Calu3 (cell line): ENCODE measurements at regions of chr2 and their contacts with region 1.

Region 1: GRCh38 chr2:84925724-84926376 is 20.4 kb downstream of the TMSB10 start:
- DNase-seq: peak; percentile 99
- H3K4me3 Mint-ChIP-seq: peak overlapping the region; percentile 63
- H3K27ac Mint-ChIP-seq: peak overlapping the region; percentile 30
- H3K4me1 Mint-ChIP-seq: peaks cover 36% of the 10 kb centered on the region
- H3K27me3 Mint-ChIP-seq: no peaks in the 10 kb centered on the region
- CTCF ChIP-seq: peak; percentile 93

Region 2: DNA sequence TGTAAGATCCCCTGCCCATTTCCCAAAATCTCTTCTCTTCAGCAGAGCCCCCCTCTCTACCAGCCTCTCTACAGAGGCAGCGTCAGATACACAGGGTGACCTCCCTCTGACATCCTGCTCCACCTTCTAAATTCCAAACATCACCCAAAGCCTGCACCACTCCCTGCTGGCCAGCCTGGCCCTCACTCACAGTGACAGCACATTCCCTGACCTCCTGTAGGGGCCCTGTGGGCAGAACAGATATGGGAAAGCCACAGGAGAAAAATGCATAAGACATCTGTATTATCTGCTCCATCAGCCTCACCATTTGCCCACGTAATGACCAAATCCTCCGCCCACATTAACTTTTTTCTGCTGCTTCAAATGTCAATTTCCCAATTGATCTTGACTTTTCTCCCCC is 85.5 kb before region 1 on chr2:
- CTCF ChIA-PET with region 1: no interaction called
- intact Hi-C with region 1: no loop called
- DNase-seq: no peak
- H3K4me3 Mint-ChIP-seq: no peak overlapping the region
- H3K27ac Mint-ChIP-seq: no peak overlapping the region
- H3K4me1 Mint-ChIP-seq: peaks cover 10% of the 10 kb centered on the region
- H3K27me3 Mint-ChIP-seq: peaks cover 26% of the 10 kb centered on the region
- CTCF ChIP-seq: no peak

Region 3: DNA sequence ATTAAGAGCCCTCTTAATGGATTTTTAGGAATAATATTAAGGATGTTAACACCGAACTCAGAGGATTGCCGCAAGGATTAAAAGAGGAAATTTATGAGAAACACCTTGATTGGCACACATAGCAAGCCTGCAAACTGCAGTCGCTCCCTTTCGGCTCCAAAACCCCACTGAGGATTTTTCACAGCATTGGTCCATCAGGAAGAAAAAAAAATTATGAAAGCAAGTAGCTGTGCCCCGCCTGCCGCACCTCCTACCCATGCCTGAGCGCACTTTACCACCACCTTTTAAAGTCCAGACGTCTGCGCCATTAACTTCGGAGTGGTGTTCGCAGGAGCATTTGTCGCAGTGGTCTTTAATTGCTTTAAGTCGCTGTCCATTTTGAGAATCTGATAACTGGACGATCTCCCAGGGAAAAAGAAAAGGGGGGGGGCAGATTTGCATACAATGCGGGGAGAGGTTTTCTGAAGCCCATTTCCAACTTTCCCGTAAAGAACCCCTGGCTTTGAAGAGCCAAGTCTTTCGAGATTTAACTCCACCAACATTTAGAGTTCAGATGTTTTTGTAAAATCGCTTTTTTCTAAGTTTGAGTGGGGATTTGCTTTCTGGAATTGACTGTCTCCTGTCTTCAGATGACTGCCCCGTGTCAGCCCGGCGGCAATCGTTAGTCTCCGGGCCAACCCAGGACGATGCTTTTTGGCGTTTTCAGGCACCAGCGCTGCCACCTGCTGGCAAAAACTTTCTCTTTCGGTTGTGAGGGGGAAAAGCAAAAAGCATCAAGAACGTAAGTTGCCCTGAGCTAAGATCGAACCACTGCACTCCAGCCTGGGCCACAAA is 44.1 kb before region 1 on chr2:
- CTCF ChIA-PET with region 1: interaction called, 15 read pairs
- intact Hi-C with region 1: no loop called
- DNase-seq: peak; percentile 82
- H3K4me3 Mint-ChIP-seq: peak overlapping the region; percentile 81
- H3K27ac Mint-ChIP-seq: no peak overlapping the region
- H3K4me1 Mint-ChIP-seq: peaks cover 23% of the 10 kb centered on the region
- H3K27me3 Mint-ChIP-seq: peaks cover 41% of the 10 kb centered on the region
- CTCF ChIP-seq: peak; percentile 83

Region 4: GRCh38 chr2:84946204-84947009 is 20.6 kb after region 1 on chr2:
- CTCF ChIA-PET with region 1: interaction called, 15 read pairs
- intact Hi-C with region 1: no loop called
- DNase-seq: peak; percentile 87
- H3K4me3 Mint-ChIP-seq: peak overlapping the region; percentile 35
- H3K27ac Mint-ChIP-seq: peak overlapping the region; percentile 95
- H3K4me1 Mint-ChIP-seq: peaks cover 31% of the 10 kb centered on the region
- H3K27me3 Mint-ChIP-seq: no peaks in the 10 kb centered on the region
- CTCF ChIP-seq: no peak

Region 5: DNA sequence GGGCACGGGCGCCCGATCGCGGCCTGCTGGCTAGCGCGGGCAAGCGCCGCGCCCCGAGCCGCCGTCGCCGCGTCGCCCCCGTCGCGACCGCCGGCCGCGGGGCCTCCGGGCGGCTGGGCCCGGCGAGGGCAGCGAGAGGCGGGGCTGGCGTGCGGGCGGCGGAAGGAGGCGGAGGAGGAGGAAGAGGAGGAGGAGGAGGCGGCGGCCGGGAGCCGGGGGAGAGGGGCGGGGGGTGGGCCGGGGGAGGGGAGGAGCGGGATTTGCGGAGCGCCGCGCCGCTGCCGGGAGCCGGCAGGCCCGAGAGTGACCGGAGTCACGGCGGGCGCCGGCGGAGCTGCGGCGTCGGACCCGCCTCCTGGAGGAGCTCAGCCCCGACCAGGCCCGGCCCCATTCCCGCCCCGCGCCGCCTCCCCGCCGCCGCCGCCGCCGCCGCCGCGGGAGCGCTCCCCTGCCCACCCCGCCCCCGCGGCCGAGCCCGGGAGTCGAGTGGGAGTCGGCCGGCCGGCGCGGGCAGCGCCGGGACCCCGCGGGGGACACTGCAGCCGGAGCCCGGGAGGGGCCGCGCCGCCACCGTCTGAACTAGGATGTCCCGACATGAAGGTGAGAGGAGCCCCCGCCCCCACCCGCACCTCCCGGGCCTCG is 45.1 kb after region 1 on chr2 and contains the start of gene KCMF1:
- CTCF ChIA-PET with region 1: interaction called, 4 read pairs
- intact Hi-C with region 1: loop called (anchors 2 kb)
- DNase-seq: peak; percentile 84
- H3K4me3 Mint-ChIP-seq: peak within 1 kb of the TSS; percentile 71
- H3K27ac Mint-ChIP-seq: peak within 1 kb of the TSS; percentile 99
- H3K4me1 Mint-ChIP-seq: peaks cover 19% of the 10 kb centered on the region
- H3K27me3 Mint-ChIP-seq: no peaks in the 10 kb centered on the region
- CTCF ChIP-seq: no peak
- total RNA-seq, gene KCMF1: 68.0 and 69.8 TPM in 2 replicates

Region 6: GRCh38 chr2:85302121-85302520 is 376.3 kb after region 1 on chr2:
- CTCF ChIA-PET with region 1: interaction called, 4 read pairs
- intact Hi-C with region 1: loop called (anchors 2 kb)
- DNase-seq: no peak
- H3K4me3 Mint-ChIP-seq: no peak overlapping the region
- H3K27ac Mint-ChIP-seq: no peak overlapping the region
- H3K4me1 Mint-ChIP-seq: peaks cover 6% of the 10 kb centered on the region
- H3K27me3 Mint-ChIP-seq: peaks cover 13% of the 10 kb centered on the region
- CTCF ChIP-seq: no peak